A549 (cell line): ENCODE measurements at regions of chr6 and their contacts with region 1.

Region 1: DNA sequence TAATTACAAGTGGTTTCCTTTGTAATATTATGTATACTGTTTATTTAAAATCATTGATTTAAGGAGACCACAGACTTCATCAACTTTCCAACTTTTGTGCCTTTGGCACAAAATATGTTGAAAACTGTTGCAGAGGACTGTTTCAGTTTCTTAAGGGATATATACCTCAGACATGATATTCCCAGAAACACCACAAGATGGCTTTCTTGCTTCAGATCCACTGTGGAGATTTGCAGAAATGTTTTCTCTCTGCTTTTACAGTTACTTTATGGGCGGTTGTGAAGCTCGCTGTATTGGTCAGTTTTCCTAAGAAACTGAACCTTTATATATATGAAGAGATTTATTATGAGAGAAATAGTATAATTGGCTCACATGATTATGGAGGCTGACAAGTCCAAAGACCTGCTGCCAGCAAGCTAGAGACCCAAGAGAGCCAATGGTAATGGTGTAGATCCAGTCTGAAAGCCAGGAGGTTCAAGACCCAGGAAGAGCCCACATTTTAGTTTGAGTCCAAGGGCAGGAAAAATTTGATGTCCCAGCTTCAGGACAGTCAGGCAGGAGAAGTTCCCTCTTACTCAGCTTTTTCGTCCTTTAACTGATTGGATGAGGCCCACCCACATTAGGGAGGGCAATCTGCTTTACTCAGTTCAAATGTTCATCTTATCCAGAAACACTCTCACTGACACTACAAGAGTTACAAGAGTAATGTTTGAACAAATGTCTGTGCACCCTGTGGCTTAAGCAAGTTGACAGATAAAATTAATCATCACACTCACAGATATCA is 12.8 kb downstream of the ME1 start:
- DNase-seq: peak; percentile 33 to 64
- ATAC-seq: peak; percentile 89 to 90
- H3K4me3 ChIP-seq: no peak overlapping the region
- H3K27ac ChIP-seq: no peak overlapping the region
- H3K4me1 ChIP-seq: peaks cover 9% of the 10 kb centered on the region; the same call in 2 of the 3 replicates
- CTCF ChIP-seq: peak; percentile 60
- EP300 ChIP-seq: no peak
- POLR2A ChIP-seq: no peak
- RAD21 ChIP-seq: peak; percentile 59 to 69

Region 2: DNA sequence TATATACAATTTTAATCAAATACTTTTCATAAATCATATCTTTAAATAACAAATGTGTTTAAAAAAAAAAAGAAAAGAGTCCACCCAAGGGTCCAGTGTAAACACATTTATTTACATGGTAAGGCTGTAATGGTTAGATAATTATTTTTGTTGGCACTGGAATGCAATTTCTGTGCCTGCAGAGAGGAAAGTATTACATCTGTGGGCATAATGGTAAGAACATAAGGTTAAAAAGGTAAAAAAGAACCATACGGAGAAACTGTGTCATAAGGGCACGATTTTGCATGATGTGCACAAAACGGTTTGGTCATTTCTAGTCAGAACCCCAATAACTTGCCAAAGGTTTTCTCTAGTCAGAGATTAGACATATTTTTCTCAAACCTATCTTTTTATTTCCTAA is 170.6 kb before region 1 on chr6:
- CTCF ChIA-PET with region 1: no interaction called
- POLR2A ChIA-PET with region 1: no interaction called
- DNase-seq: no peak
- ATAC-seq: no peak
- H3K4me3 ChIP-seq: no peak overlapping the region
- H3K27ac ChIP-seq: no peak overlapping the region
- H3K4me1 ChIP-seq: no peaks in the 10 kb centered on the region; the same call in 2 of the 3 replicates
- CTCF ChIP-seq: no peak
- EP300 ChIP-seq: no peak
- POLR2A ChIP-seq: no peak
- RAD21 ChIP-seq: no peak

Region 3: DNA sequence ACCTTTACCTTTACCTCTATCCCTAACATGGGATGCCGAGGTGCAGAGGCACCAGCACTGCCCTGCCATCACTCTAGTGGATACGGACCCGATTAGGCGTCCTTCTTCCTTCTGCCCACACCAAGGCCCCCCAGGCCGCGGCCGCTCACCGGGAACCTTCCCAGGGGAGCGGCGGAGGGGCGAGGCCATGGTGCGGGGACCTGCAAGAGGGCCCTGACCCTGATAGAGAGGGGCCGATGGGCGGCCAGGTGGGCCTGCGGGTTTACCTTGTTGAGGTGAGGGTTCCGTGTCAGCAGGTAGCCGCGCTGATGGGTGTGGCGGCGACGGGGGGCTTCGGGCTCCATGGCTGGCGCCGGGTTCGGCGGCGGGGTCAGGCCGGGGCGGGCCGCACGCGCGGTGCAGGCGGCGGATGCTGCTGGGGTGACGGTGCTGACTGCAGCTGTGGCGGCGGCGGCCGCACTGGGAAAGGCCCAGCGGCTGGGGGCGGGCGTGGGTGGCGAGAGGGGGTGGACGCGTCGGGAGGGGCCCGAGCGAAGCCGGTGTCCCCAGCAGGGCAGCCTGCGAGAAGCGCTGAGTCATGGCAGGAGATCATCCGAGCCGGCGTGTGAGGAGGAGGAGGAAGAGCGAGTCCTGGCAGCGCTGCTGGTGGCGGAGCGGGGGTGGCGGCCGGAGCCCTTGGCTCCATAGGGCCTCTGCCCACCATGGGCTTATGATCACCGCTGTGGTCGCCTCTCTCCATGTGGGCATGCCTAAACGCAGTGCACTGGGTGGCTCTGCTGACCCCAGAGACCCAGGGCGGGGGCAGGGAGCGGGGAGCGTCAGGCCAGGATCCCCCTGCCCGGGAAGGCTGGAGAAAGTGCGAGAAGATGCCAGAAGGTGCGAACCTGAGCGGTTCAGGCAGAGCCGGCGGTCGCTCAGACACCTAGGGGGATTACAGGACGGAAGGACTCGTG is 12.8 kb after region 1 on chr6 and contains the start of gene ME1:
- CTCF ChIA-PET with region 1: interaction called, 10 read pairs
- POLR2A ChIA-PET with region 1: no interaction called
- DNase-seq: peak; percentile 36 to 90
- ATAC-seq: peak; percentile 91 to 92
- H3K4me3 ChIP-seq: peak within 1 kb of the TSS; percentile 76
- H3K27ac ChIP-seq: peak within 1 kb of the TSS; percentile 98 to 99
- H3K4me1 ChIP-seq: peaks cover 60% of the 10 kb centered on the region
- CTCF ChIP-seq: no peak
- EP300 ChIP-seq: no peak
- POLR2A ChIP-seq: peak; percentile 66
- RAD21 ChIP-seq: no peak
- polyA plus RNA-seq, gene ME1: 59.1 and 69.5 TPM in 2 replicates

Region 4: GRCh38 chr6:83505356-83505755 is 87.3 kb after region 1 on chr6:
- CTCF ChIA-PET with region 1: interaction called, 75 read pairs
- POLR2A ChIA-PET with region 1: no interaction called
- DNase-seq: no peak
- ATAC-seq: no peak
- H3K4me3 ChIP-seq: no peak overlapping the region
- H3K27ac ChIP-seq: no peak overlapping the region
- H3K4me1 ChIP-seq: peaks cover 8% of the 10 kb centered on the region; the same call in 1 of the 3 replicates
- CTCF ChIP-seq: no peak
- EP300 ChIP-seq: no peak
- POLR2A ChIP-seq: no peak
- RAD21 ChIP-seq: no peak